ENCODE measurements at regions of chr13 and their contacts with region 1.

Region 1: DNA sequence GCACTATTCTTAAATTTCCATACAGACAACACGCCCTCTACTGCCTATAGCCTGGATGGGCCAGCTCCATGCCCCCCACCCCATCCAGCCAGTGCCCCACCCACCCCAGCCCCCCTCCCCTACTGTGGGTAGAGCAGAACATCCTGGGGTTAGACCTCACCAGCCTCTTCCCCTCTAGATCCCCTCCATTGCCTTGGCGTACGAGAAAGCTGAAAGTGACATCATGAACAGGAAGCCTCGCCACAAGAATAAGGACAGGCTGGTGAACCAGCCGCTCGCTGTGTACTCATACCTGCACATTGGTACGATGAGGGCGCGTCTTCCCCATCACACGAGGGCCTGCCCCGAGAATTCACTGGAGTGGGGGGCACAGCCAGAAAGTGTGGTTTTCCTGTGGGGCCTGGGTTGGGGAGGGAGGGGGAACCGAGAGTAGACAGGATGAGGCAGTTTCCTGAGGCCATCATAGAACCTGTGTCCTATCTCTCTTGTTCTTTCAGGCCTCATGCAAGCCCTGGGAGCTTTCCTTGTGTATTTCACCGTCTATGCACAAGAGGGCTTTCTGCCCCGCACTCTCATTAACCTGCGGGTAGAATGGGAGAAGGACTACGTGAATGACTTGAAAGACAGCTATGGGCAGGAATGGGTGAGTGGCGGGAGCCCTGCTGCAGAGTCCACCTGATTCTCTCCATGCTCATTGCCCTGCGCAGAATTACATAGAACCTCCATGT is 29.1 kb downstream of the ATP12A start:
- DNase-seq: peak; percentile 88
- H3K4me3 Mint-ChIP-seq: no peak overlapping the region
- H3K27ac Mint-ChIP-seq: peak overlapping the region; percentile 62
- H3K4me1 Mint-ChIP-seq: peaks cover 14% of the 10 kb centered on the region
- H3K27me3 Mint-ChIP-seq: peaks cover 1% of the 10 kb centered on the region

Region 2: DNA sequence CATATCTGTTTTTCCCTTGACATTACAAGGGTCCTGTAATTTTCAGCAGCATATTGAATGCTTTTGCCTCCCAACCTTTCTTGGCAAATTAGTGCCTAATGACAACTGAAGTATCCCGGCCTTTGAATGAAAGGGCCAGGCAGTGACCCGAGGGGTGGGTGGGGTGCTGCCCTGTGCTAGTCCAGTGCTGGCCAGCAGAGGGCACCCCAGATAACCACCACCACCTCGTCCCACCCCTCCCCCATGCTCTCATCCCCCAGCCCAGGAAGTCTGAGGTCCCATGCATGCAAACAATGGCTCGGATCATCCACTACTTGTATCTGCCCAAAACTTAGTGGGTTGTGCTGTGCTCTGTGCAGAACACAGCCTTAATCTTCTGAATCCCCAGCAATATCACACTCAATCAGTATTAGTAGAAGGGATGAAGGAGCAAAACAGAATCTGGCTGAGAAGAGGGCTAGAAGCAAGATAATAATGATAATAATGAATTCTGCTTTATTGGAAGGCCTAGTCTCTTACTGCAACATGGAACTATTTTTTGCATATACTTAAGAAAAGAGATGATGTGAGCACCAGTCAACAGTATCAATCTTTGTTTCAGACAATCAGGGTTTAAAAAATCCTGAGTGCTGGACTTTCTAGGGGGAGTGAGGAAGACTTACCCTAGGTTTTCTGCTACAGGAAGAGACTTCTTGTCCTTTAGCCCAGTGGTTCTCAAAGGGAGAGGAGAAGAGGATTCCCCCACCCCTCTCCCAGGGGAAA is 25.3 kb before region 1 on chr13:
- CTCF ChIA-PET with region 1: interaction called, 10 read pairs
- POLR2A ChIA-PET with region 1: no interaction called
- intact Hi-C with region 1: loop called (anchors 2 kb)
- DNase-seq: peak; percentile 79
- H3K4me3 Mint-ChIP-seq: peak overlapping the region; percentile 23
- H3K27ac Mint-ChIP-seq: no peak overlapping the region
- H3K4me1 Mint-ChIP-seq: peaks cover 30% of the 10 kb centered on the region
- H3K27me3 Mint-ChIP-seq: peaks cover 34% of the 10 kb centered on the region

Region 3: DNA sequence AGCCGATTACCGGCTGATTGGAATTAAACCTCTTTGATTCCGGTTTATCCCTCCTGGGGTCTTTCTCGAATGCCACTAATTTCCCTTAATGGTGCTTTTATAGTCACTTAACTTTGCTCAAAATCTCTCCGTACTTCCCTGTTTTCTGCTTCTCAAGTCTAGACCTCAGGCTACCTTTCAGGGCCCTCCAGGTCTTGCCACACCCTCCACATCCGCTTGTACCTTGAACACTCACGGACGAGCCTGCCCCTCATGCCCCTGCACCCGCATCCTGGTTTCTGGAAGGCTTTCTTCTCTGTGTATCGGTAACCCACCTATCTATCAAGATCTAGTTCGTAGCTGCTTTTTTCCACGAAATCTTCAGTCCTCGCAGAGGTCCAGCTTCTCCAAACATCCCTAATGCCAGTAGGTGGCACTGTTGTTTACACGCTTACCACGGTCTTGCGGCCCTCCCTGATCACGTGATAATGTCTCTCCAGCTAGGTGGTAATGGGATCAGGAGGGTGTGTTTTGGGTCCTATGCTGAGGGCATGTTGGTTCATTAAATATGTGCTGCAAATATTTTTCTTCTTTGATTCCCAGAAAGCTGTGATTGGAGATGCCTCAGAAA is 15.4 kb before region 1 on chr13:
- CTCF ChIA-PET with region 1: interaction called, 31 read pairs
- POLR2A ChIA-PET with region 1: no interaction called
- intact Hi-C with region 1: no loop called
- DNase-seq: peak; percentile 56
- H3K4me3 Mint-ChIP-seq: no peak overlapping the region
- H3K27ac Mint-ChIP-seq: no peak overlapping the region
- H3K4me1 Mint-ChIP-seq: peaks cover 6% of the 10 kb centered on the region
- H3K27me3 Mint-ChIP-seq: peaks cover 51% of the 10 kb centered on the region

Region 4: GRCh38 chr13:24737042-24737441 is 27.7 kb after region 1 on chr13:
- CTCF ChIA-PET with region 1: no interaction called
- POLR2A ChIA-PET with region 1: no interaction called
- intact Hi-C with region 1: no loop called
- DNase-seq: no peak
- H3K4me3 Mint-ChIP-seq: no peak overlapping the region
- H3K27ac Mint-ChIP-seq: no peak overlapping the region
- H3K4me1 Mint-ChIP-seq: no peaks in the 10 kb centered on the region
- H3K27me3 Mint-ChIP-seq: no peaks in the 10 kb centered on the region

Region 5: GRCh38 chr13:24747248-24748060 is 38.1 kb after region 1 on chr13:
- CTCF ChIA-PET with region 1: no interaction called
- POLR2A ChIA-PET with region 1: no interaction called
- intact Hi-C with region 1: no loop called
- DNase-seq: peak; percentile 37
- H3K4me3 Mint-ChIP-seq: peak overlapping the region; percentile 64
- H3K27ac Mint-ChIP-seq: no peak overlapping the region
- H3K4me1 Mint-ChIP-seq: peaks cover 15% of the 10 kb centered on the region
- H3K27me3 Mint-ChIP-seq: peaks cover 46% of the 10 kb centered on the region

Region 6: GRCh38 chr13:24922745-24923591 is 213.6 kb after region 1 on chr13:
- CTCF ChIA-PET with region 1: no interaction called
- POLR2A ChIA-PET with region 1: interaction called, 3 read pairs
- intact Hi-C with region 1: loop called (anchors 2 kb)
- DNase-seq: peak; percentile 96
- H3K4me3 Mint-ChIP-seq: peak overlapping the region; percentile 90
- H3K27ac Mint-ChIP-seq: peak overlapping the region; percentile 92
- H3K4me1 Mint-ChIP-seq: peaks cover 18% of the 10 kb centered on the region
- H3K27me3 Mint-ChIP-seq: no peaks in the 10 kb centered on the region